Heart right ventricle (tissue), 16 donors: ENCODE measurements at regions of chr3 and their contacts with region 1.

Region 1: GRCh38 chr3:29683018-29683993 is 402.4 kb downstream of the RBMS3 start:
- DNase-seq: peak in 1 of 2 donors; percentile 25
- ATAC-seq: peak; percentile 26 to 87 (median 80)
- H3K4me3 ChIP-seq: peak overlapping the region in 1 of 10 donors; percentile 2
- H3K27ac ChIP-seq: peak overlapping the region; percentile 51 to 88 (median 72)
- H3K4me1 ChIP-seq: peaks cover 8 to 38% (median 31%) of the 10 kb centered on the region in 9 donors
- H3K27me3 ChIP-seq: no peaks in the 10 kb centered on the region
- CTCF ChIP-seq: no peak

Region 2: GRCh38 chr3:29465836-29466235 is 217.5 kb before region 1 on chr3:
- intact Hi-C with region 1: no loop called
- DNase-seq: peak in 1 of 2 donors; percentile 13
- ATAC-seq: peak in 6 of 8 donors; percentile 28 to 76 (median 68)
- H3K4me3 ChIP-seq: no peak overlapping the region
- H3K27ac ChIP-seq: no peak overlapping the region
- H3K4me1 ChIP-seq: peaks cover 0 to 21% (median 10%) of the 10 kb centered on the region in 9 donors
- H3K27me3 ChIP-seq: no peaks in the 10 kb centered on the region
- CTCF ChIP-seq: no peak

Region 3: GRCh38 chr3:29627136-29628117 is 55.9 kb before region 1 on chr3:
- intact Hi-C with region 1: no loop called
- DNase-seq: no peak
- ATAC-seq: no peak
- H3K4me3 ChIP-seq: no peak overlapping the region
- H3K27ac ChIP-seq: no peak overlapping the region
- H3K4me1 ChIP-seq: peaks cover 0 to 27% (median 15%) of the 10 kb centered on the region in 9 donors
- H3K27me3 ChIP-seq: no peaks in the 10 kb centered on the region
- CTCF ChIP-seq: no peak

Region 4: DNA sequence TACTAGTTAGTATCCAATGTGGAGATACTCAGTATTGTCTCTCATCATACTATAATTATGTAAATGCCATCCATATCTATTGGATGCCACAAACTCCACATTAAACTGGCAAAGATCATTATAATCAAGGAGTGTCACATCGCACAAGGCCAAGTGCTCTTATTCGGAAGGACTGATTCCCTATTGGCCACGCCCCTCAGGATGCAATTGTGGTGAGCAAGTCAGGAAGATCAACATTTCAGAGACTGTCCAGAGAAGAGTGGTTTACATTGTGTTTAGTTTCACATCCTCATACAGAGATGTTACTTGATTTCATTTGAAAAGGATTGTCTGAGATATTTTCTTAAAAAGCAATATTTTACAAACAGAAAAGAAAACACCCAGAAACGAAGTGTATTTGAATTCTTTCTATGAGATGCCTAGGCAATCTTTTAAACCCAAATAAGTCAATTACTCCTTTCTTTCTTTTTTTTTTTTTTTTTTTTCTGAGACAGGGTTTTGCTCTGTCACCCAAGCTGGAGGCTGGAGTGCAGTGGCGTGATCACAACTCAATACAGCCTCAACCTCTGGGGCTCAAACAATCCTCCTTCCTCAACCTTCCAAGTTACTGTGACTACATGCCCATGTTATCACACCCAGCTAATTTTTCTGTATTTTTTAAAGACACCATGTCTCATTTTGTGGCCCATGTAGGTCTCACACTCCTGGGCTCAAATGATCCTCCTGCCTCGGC is 33.3 kb before region 1 on chr3:
- intact Hi-C with region 1: loop called in 1 of 10 experiments (anchors 5 kb)
- DNase-seq: peak in 1 of 2 donors; percentile 27
- ATAC-seq: peak in 5 of 8 donors; percentile 39 to 58 (median 47)
- H3K4me3 ChIP-seq: no peak overlapping the region
- H3K27ac ChIP-seq: no peak overlapping the region
- H3K4me1 ChIP-seq: peaks cover 0 to 22% (median 10%) of the 10 kb centered on the region in 9 donors
- H3K27me3 ChIP-seq: no peaks in the 10 kb centered on the region
- CTCF ChIP-seq: no peak